ENCODE measurements at regions of chr11 and their contacts with region 1.

Region 1: DNA sequence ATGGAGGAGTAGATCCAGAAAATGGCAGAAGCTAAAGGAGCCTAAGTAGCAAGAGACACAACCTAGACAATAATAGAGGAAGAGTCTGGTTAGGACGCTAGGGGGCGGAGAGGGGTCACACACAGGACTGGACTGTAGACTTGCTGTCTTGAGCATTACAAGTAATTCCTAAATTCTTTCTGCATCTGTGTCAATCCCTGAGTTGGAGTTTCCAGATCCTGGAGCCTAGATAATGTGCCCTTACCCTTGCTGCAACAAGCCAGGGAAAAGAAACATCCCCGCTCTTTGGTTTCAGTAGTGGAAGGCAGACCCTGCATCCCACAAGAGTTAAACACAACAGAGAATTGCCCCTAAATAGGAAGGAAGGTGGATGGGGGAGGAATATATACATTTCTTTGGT is 14.9 kb upstream of the CCDC73 start:
- DNase-seq: peak; percentile 84
- H3K4me3 Mint-ChIP-seq: no peak overlapping the region
- H3K27ac Mint-ChIP-seq: no peak overlapping the region
- H3K4me1 Mint-ChIP-seq: peaks cover 8% of the 10 kb centered on the region
- H3K27me3 Mint-ChIP-seq: no peaks in the 10 kb centered on the region
- CTCF ChIP-seq: peak; percentile 76

Region 2: GRCh38 chr11:32829680-32830412 is 20.5 kb after region 1 on chr11 and contains the start of gene PRRG4:
- CTCF ChIA-PET with region 1: no interaction called
- intact Hi-C with region 1: loop called (anchors 2 kb)
- DNase-seq: peak; percentile 88
- H3K4me3 Mint-ChIP-seq: peak within 1 kb of the TSS; percentile 87
- H3K27ac Mint-ChIP-seq: peak within 1 kb of the TSS; percentile 43
- H3K4me1 Mint-ChIP-seq: peaks cover 31% of the 10 kb centered on the region
- H3K27me3 Mint-ChIP-seq: no peaks in the 10 kb centered on the region
- CTCF ChIP-seq: no peak
- total RNA-seq, gene PRRG4: 22.9 and 23.9 TPM in 2 replicates

Region 3: DNA sequence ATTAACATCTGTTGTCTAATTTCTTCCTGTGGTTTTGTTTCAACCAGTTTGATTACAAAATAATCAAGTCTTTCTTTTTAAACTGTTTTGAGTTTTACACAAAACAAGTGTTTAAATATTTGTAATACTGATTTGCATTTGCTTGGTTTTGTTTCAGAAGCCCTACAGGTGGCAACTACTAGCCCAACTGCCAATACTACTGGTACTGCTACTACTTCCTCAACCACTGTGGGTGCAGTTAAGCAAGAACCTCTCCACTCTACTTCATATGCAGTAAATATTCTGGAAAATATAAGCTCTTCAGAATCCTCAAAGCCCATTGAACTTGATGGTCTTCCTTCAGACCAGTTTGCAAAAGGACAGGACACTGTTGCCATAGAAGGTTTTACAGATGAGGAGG is 144.4 kb after region 1 on chr11:
- CTCF ChIA-PET with region 1: no interaction called
- intact Hi-C with region 1: loop called (anchors 5 kb)
- DNase-seq: no peak
- H3K4me3 Mint-ChIP-seq: no peak overlapping the region
- H3K27ac Mint-ChIP-seq: no peak overlapping the region
- H3K4me1 Mint-ChIP-seq: no peaks in the 10 kb centered on the region
- H3K27me3 Mint-ChIP-seq: no peaks in the 10 kb centered on the region
- CTCF ChIP-seq: no peak

Measured in Calu3 (cell line).